ENCODE measurements at regions of chr9 and their contacts with region 1.

Region 1: DNA sequence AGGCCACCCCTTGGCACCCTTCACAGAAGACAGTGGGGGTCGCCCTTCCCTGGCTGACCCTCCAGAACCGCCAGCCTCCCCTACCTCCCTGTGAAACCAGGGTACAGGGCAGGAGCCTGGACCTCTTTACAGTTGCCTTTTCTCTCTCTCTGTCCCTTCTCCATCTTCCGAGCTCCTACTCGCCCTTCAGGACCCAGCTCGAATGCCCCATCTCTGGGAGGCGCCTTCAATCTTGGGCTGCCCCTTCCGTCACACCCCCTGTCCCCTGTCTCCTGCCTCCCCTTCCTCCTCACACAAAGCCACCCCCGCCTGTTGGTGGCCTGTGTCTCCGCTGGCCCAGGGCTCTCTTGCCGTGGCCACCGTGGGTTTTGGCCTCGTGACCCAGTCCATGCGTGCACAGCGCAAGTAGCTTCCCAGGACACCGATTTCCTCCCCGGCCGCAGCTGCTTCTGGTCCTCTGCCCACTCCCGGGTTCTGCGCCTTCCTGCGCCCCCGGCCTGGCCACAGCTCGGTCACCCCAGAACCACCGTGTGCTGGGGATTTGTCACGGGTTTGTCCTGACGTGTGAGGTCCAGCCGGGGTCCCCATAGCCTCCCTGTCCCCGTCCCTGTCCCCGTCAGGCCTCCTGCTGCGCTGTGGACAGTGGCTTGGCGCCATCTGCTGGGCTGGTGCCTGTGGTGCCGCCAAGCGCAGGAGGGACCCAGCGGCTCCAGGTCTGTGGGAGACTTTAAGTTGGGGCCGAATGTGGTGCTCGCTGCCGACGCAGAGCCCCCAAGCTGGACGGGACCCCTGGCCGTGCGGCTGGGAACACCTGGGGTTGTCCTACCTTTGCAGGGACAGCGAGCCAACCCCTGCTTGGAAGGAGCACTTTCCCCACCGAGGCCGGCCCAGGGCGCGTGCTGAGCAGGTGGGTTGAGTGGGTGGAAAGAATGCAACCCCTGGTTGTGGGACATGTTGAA is 4.0 kb upstream of the TMEM250 start:
- DNase-seq: no peak
- H3K4me3 ChIP-seq: no peak overlapping the region
- H3K27ac ChIP-seq: no peak overlapping the region
- H3K27me3 ChIP-seq: peaks cover 28% of the 10 kb centered on the region
- CTCF ChIP-seq: peak; percentile 95

Region 2: DNA sequence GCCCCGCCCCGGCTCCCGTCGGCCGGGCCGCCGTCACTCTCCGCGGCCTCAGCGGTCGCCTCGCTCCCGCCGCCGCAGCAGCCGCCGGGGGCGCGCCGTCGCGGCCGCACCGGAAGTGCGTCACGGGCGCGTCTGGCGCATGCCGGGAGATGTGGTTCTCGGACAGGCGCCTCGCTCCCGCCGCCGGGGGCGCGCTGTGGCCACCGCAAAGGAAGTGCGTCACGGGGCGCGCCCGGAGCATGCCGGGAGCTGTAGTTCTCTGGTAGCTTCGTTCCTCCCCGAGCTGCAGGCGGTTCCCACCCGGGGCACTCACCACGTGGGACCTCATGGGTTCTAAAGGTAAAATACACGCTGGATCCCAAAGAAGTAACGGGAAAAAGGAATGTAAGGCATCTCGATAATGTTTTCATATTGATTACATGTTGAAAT is 161.4 kb before region 1 on chr9 and contains the start of gene UBAC1:
- CTCF ChIA-PET with region 1: interaction called, 58 read pairs
- POLR2A ChIA-PET with region 1: interaction called, 3 read pairs
- DNase-seq: peak; percentile 78
- H3K4me3 ChIP-seq: peak within 1 kb of the TSS; percentile 80
- H3K27ac ChIP-seq: peak within 1 kb of the TSS; percentile 39
- H3K27me3 ChIP-seq: peaks cover 11% of the 10 kb centered on the region
- CTCF ChIP-seq: no peak; the same call in 1 of the 2 replicates
- polyA plus RNA-seq, gene UBAC1: 33.6 and 35.8 TPM in 2 replicates

Region 3: GRCh38 chr9:135968083-135968476 is 154.6 kb before region 1 on chr9:
- CTCF ChIA-PET with region 1: interaction called, 58 read pairs
- POLR2A ChIA-PET with region 1: interaction called, 4 read pairs
- DNase-seq: no peak
- H3K4me3 ChIP-seq: no peak overlapping the region
- H3K27ac ChIP-seq: no peak overlapping the region
- H3K27me3 ChIP-seq: peaks cover 23% of the 10 kb centered on the region
- CTCF ChIP-seq: no peak

Region 4: DNA sequence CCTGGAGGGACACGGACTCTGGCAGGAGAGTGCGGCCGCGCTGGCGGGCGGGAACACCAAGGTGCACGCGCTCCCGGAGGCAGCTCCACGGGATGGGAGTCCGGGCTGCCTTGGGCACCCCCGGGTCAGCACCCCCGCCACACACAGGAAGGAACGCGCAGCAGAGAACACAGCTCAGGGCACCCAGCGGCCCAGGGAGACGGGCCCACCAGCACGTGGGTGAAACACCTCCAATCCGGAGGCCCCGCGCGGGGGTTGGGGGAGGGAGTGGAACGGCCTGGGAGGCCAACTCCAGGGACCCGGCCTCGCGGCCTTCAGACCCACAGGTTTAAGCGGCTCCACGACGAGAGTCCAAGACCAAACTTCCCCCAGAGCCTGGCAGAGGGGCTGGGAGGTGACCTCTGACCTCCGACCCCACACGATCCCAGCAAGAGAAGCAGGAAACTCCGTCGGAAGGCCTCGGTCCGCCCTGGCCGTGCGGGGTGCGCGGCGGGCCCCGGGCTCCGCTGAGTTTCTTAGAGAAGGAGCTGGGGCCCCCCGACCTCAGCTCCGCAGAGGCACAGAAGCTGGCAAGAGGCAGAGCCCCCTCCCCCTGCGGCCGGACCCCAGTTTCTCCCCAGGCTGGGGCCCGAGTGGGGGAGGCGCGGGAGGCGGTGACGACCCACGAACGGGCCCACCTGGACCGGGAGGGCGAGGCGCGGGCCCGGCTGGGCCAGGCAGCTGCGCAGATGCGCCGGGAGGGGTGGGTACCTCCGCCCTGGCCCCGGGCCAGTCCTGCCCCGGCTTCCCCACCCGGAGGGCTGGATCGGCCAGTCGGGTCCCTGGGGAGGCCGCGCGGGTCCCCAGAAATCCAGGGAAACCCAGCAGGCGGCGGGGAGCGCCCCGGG is 28.5 kb before region 1 on chr9:
- CTCF ChIA-PET with region 1: interaction called, 33 read pairs
- POLR2A ChIA-PET with region 1: interaction called, 5 read pairs
- DNase-seq: no peak
- H3K4me3 ChIP-seq: peak overlapping the region; percentile 73
- H3K27ac ChIP-seq: peak overlapping the region; percentile 39
- H3K27me3 ChIP-seq: no peaks in the 10 kb centered on the region
- CTCF ChIP-seq: no peak

Measured in AG04450 (cell line).